ENCODE measurements at regions of chr9 and their contacts with region 1.

Region 1: GRCh38 chr9:105881654-105882349 is 187.5 kb downstream of the TMEM38B start:
- DNase-seq: peak; percentile 66
- H3K4me3 ChIP-seq: no peak overlapping the region
- H3K27ac ChIP-seq: no peak overlapping the region
- H3K4me1 ChIP-seq: no peaks in the 10 kb centered on the region
- CTCF ChIP-seq: peak; percentile 96

Region 2: GRCh38 chr9:105425841-105426436 is 455.9 kb before region 1 on chr9:
- CTCF ChIA-PET with region 1: no interaction called
- POLR2A ChIA-PET with region 1: no interaction called
- intact Hi-C with region 1: loop called (anchors 5 kb)
- DNase-seq: peak; percentile 33
- H3K4me3 ChIP-seq: no peak overlapping the region
- H3K27ac ChIP-seq: no peak overlapping the region
- H3K4me1 ChIP-seq: no peaks in the 10 kb centered on the region
- CTCF ChIP-seq: peak; percentile 82

Region 3: DNA sequence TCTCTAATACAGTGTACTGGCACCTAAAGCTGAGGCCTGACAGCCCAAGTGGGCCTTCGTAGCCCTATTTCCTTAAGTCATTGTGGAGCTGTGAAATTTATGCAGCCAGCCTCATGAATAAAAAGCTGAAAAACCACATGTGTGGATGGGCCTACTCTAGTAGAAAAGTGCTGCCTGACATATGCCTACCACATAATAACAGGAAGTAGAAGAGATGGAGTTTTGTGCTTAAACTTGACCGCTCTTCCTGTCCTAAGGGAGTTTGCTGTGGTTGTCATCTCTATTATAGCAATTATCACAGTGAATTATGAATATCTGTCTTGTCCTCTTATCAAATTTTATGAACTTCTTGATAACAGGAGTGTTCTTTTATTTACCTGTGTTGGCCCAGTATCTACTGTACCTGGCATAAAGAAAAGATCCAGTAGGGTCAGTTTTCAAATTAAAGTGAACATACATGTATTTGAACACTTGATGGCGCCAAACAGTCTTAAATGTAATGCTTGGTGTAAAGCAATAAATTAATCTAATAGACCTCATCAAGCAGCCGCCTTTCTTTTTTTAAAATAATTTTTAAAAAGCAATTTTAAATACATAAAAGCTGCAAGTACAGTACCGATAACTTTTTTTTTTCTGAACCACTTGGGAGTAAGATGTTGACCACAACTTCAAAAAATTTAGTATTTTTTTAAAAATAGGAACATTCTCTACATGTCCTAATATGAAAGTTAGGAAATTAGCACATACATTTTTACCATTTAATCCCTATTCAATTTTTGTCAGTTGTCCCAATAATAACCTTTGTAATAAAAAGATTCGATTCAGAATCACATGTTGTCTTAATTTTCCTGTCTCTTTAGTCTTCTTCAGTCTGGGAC is 272.8 kb before region 1 on chr9:
- CTCF ChIA-PET with region 1: no interaction called
- POLR2A ChIA-PET with region 1: no interaction called
- intact Hi-C with region 1: loop called (anchors 1 kb)
- DNase-seq: peak; percentile 75
- H3K4me3 ChIP-seq: no peak overlapping the region
- H3K27ac ChIP-seq: no peak overlapping the region
- H3K4me1 ChIP-seq: no peaks in the 10 kb centered on the region
- CTCF ChIP-seq: peak; percentile 92

Region 4: GRCh38 chr9:105842023-105842644 is 39.7 kb before region 1 on chr9:
- CTCF ChIA-PET with region 1: interaction called, 3 read pairs
- POLR2A ChIA-PET with region 1: interaction called, 3 read pairs
- intact Hi-C with region 1: loop called (anchors 5 kb)
- DNase-seq: peak; percentile 45
- H3K4me3 ChIP-seq: no peak overlapping the region
- H3K27ac ChIP-seq: no peak overlapping the region
- H3K4me1 ChIP-seq: no peaks in the 10 kb centered on the region
- CTCF ChIP-seq: peak; percentile 97

Region 5: DNA sequence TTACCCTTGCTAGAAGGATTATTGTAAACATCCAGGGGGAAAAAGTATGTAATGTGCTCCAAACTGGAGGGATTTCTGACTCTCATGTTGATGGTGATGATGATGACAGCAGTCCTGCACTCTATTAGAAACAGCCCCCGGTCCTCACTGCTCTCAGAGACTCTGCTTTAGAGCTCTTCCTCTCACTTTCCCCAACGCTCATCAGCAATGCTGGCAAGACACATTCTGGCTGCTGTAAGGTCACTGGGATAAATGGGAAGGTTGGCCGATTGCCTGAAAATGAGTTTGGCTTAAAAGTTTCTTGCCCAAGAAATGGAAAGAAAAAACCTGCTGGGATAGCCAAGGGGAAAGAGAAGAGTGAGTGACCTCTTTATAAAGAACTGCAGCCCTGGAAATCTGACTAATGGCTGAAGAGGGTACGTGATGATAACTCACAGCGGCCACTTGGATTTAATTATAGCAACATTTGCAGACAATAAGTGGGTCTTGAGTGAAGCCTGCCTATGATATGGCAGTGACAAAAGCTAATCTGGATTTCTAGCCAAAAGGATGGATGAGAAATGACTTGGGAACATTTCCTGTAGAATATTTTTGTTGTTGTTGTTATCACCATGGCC is 48.3 kb after region 1 on chr9:
- CTCF ChIA-PET with region 1: no interaction called
- POLR2A ChIA-PET with region 1: no interaction called
- intact Hi-C with region 1: no loop called
- DNase-seq: no peak
- H3K4me3 ChIP-seq: no peak overlapping the region
- H3K27ac ChIP-seq: no peak overlapping the region
- H3K4me1 ChIP-seq: no peaks in the 10 kb centered on the region
- CTCF ChIP-seq: no peak

Measured in OCI-LY7 (cell line).